Cardiac septum (tissue), 1 donor: ENCODE measurements at regions of chr5 and their contacts with region 1.

Region 1: GRCh38 chr5:54719384-54720283 is 202.1 kb downstream of the SNX18 start:
- DNase-seq: peak; percentile 77

Region 2: DNA sequence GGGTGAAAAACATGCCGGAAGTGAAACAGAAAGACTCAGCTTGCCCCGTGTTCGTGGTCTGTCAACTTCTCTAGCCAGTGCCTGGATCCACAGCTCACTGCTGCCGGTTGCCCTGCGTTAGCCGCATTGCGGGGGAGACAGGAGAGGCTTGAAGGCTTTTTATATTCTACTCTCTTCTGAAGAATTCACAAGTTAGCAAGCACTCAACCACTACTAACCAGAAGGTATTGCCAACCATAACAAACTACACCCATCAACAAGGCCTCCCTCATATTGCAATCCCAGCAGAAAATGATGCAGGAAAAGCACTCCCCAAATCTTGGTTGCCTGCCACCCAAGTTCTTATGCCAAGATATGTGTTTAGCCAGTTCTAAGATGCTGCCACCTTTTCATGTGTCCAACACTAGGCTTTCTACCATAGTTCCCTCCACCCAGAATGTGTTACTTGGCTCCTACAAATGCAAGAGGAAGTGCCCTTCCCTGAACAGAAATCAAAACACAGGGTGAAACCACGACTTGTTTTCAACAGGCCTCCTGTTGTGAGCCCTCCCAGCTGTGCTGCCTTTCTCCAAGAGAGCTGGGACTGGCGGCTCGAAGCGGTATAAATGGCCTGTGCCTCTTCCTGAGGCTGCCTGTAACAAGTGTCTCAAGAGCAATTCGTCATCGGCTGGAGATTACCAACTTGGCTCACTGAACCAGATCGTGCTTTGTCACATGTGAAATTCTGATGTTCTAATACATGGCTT is 73.1 kb before region 1 on chr5:
- intact Hi-C with region 1: loop called (anchors 2 kb)
- DNase-seq: peak; percentile 90

Region 3: GRCh38 chr5:54658014-54658413 is 61.6 kb before region 1 on chr5:
- intact Hi-C with region 1: loop called (anchors 1 kb)
- DNase-seq: no peak

Region 4: GRCh38 chr5:54703133-54703532 is 16.5 kb before region 1 on chr5:
- intact Hi-C with region 1: loop called (anchors 2 kb)
- DNase-seq: no peak

Region 5: DNA sequence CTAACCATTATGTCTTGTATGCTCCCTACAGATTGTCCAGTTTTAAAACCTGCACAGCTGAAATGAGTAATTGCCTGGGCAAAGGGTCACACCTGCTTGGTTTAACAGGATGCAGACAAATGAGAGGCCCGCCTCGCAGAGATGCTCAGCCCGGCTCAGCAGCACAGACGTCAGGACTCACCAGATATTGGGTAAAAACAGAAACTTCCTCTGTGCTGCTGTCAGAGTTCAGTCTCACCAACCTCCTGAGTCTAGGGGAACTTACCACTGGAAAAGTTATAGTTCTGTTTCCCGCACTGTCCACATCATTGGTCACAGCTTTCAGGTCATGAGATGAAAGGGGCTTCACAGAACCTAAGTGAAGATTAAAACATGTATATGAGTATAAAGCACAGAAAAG is 113.2 kb after region 1 on chr5:
- intact Hi-C with region 1: loop called (anchors 5 kb)
- DNase-seq: no peak